ENCODE measurements at regions of chr7 and their contacts with region 1.

Region 1: DNA sequence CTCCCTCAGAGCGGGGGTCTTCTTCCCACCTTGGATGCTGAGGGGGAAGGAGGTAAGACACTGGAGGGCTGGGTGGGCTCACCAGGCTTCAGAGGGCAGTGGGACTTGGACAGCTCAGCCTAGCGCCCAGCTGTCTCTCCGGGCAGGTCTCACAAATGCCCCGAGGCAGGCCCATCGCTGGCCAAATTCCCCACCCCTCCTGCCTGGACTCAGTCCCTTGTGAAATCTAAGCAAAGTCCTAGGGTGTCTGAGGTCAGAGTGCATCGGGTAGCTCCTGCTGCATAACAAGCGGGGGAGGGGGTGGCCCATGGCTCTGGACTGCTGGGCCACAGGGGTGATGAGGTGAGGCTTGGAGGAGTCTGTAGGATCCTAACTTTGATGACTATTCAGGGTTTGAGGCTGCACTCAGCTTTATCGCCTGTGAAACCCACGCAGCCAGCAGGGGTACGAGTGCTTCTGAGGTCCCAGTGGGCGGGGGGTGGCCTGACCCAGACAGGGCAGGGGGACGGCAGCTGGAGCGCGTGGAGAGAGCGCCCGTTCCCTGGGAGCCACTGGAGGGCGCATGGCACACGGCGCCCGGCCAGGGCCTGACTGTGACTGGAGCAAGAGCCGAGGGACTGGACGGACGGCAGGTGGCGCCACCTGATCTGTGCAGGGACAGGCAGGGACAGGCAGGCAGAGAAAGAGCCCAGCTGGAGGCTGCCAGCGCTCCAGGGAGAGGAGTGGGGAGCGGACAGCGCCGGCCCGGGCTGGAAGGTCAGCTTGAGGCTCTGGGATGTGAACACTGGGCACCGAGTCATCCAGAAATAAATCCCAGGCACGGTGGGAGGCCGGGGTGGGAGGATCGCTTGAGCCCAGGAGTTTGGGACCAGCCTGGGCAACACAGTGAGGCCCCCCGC is 10.0 kb downstream of the CYP2W1 start:
- DNase-seq: peak; percentile 94 to 96
- H3K4me3 ChIP-seq: no peak overlapping the region
- H3K27ac ChIP-seq: no peak overlapping the region
- H3K4me1 ChIP-seq: peaks cover 0 to 8% (median 5%) of the 10 kb centered on the region in 4 experiments; a peak in 5 of 7 replicates
- H3K27me3 ChIP-seq: no peaks in the 10 kb centered on the region
- CTCF ChIP-seq: peak in 2 of 3 experiments; percentile 100; a peak in 3 of 4 replicates
- EP300 ChIP-seq: 0 out of 3 replicates have a peak, but pooled peaks of 1 of the 2 experiments have one; percentile 42
- POLR2A ChIP-seq: no peak
- RAD21 ChIP-seq: peak; percentile 96 to 98

Region 2: GRCh38 chr7:909358-910329 is 83.3 kb before region 1 on chr7:
- CTCF ChIA-PET with region 1: interaction called, 12 read pairs
- POLR2A ChIA-PET with region 1: no interaction called
- DNase-seq: no peak
- H3K4me3 ChIP-seq: peak overlapping the region in 1 of 4 experiments; percentile 49; a peak in 3 of 8 replicates
- H3K27ac ChIP-seq: no peak overlapping the region
- H3K4me1 ChIP-seq: peaks cover 0 to 12% (median 2%) of the 10 kb centered on the region in 4 experiments; a peak in 3 of 7 replicates
- H3K27me3 ChIP-seq: peaks cover 0 to 11% (median 9%) of the 10 kb centered on the region in 4 experiments; a peak in 4 of 7 replicates
- CTCF ChIP-seq: no peak
- EP300 ChIP-seq: no peak
- POLR2A ChIP-seq: no peak
- RAD21 ChIP-seq: no peak

Region 3: GRCh38 chr7:920351-921070 is 72.4 kb before region 1 on chr7:
- CTCF ChIA-PET with region 1: no interaction called
- POLR2A ChIA-PET with region 1: no interaction called
- DNase-seq: peak in 1 of 2 experiments; percentile 44
- H3K4me3 ChIP-seq: no peak overlapping the region
- H3K27ac ChIP-seq: no peak overlapping the region
- H3K4me1 ChIP-seq: peaks cover 0 to 8% (median 0%) of the 10 kb centered on the region in 4 experiments; a peak in 2 of 7 replicates
- H3K27me3 ChIP-seq: no peaks in the 10 kb centered on the region
- CTCF ChIP-seq: no peak
- EP300 ChIP-seq: no peak
- POLR2A ChIP-seq: no peak
- RAD21 ChIP-seq: no peak

Region 4: GRCh38 chr7:1004018-1004852 is 11.3 kb after region 1 on chr7:
- CTCF ChIA-PET with region 1: interaction called, 36 read pairs
- POLR2A ChIA-PET with region 1: no interaction called
- DNase-seq: no peak
- H3K4me3 ChIP-seq: no peak overlapping the region
- H3K27ac ChIP-seq: no peak overlapping the region
- H3K4me1 ChIP-seq: peaks cover 0 to 3% (median 2%) of the 10 kb centered on the region in 4 experiments; a peak in 2 of 7 replicates
- H3K27me3 ChIP-seq: no peaks in the 10 kb centered on the region
- CTCF ChIP-seq: no peak
- EP300 ChIP-seq: no peak
- POLR2A ChIP-seq: no peak
- RAD21 ChIP-seq: no peak

Region 5: DNA sequence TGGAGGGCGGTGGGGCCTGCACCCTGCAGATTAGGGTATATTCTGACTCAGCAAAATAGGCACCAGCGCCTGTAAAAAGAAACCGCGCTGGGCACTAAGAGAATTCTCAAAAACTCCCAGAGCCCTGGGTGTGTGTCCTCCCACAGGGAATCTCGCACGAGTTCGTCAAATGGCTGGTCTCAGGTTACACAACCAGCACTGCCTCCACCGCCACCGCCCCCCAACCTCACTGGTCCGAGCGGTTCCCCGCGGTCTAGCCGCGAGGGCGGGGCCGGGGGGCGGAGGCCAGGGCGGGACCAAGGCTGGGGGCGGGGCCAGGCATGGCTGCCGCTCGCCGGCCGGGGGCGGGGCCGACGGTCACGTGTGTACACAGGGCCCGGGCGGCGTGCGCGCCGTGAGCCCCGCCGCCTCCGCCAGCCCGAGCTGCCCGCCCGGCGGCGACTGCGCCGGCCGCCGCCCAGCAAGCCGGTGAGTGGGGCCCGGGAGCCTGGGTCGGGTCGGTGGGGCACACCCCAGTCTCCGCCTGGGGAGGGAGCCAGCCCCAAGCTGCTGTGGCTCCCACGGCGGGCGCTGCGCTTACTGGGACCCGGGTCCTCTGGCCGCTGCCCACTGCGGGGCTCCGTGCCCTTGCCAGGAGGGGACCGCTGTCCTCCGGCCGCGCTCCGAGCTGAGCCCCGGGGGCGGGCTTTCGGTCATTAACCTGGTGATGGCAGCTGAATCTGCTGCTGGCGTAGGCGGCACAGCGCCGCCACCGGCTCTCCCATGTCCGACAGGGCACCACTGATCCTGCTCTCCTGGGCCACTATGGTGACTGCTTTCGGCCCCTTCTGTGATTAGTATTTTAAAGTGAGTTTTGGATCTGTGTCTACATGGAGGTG is 51.5 kb after region 1 on chr7 and contains the start of gene GPR146:
- CTCF ChIA-PET with region 1: interaction called, 46 read pairs
- POLR2A ChIA-PET with region 1: interaction called, 4 read pairs
- DNase-seq: peak; percentile 74 to 98
- H3K4me3 ChIP-seq: peak within 1 kb of the TSS; percentile 64 to 77 (median 70)
- H3K27ac ChIP-seq: peak within 1 kb of the TSS; percentile 81
- H3K4me1 ChIP-seq: peaks cover 6 to 17% (median 11%) of the 10 kb centered on the region in 4 experiments
- H3K27me3 ChIP-seq: no peaks in the 10 kb centered on the region
- CTCF ChIP-seq: peak; percentile 64 to 76 (median 74)
- EP300 ChIP-seq: 0 out of 3 replicates have a peak, but pooled peaks of 1 of the 2 experiments have one; percentile 11
- POLR2A ChIP-seq: peak in 1 of 2 experiments; percentile 59; a peak in 2 of 3 replicates
- RAD21 ChIP-seq: peak; percentile 26 to 53; a peak in 3 of 4 replicates
- total RNA-seq, gene GPR146: 0.54 and 1.8 TPM in 2 replicates

Region 6: GRCh38 chr7:1086588-1087464 is 93.9 kb after region 1 on chr7:
- CTCF ChIA-PET with region 1: interaction called, 83 read pairs
- POLR2A ChIA-PET with region 1: no interaction called
- DNase-seq: peak; percentile 57 to 93
- H3K4me3 ChIP-seq: peak overlapping the region in 3 of 4 experiments; percentile 18 to 51 (median 43); a peak in 5 of 8 replicates
- H3K27ac ChIP-seq: no peak overlapping the region
- H3K4me1 ChIP-seq: peaks cover 2 to 19% (median 4%) of the 10 kb centered on the region in 4 experiments
- H3K27me3 ChIP-seq: no peaks in the 10 kb centered on the region
- CTCF ChIP-seq: peak in 2 of 3 experiments; percentile 71 to 88; a peak in 3 of 4 replicates
- EP300 ChIP-seq: no peak
- POLR2A ChIP-seq: no peak
- RAD21 ChIP-seq: peak; percentile 40 to 55

Region 7: GRCh38 chr7:1137510-1138167 is 144.7 kb after region 1 on chr7:
- CTCF ChIA-PET with region 1: interaction called, 24 read pairs
- POLR2A ChIA-PET with region 1: interaction called, 3 read pairs
- DNase-seq: no peak
- H3K4me3 ChIP-seq: peak overlapping the region; percentile 50 to 76 (median 67)
- H3K27ac ChIP-seq: no peak overlapping the region
- H3K4me1 ChIP-seq: peaks cover 0 to 6% (median 2%) of the 10 kb centered on the region in 4 experiments; a peak in 4 of 7 replicates
- H3K27me3 ChIP-seq: no peaks in the 10 kb centered on the region
- CTCF ChIP-seq: no peak
- EP300 ChIP-seq: no peak
- POLR2A ChIP-seq: no peak
- RAD21 ChIP-seq: no peak

Region 8: GRCh38 chr7:1169409-1170368 is 176.7 kb after region 1 on chr7:
- CTCF ChIA-PET with region 1: interaction called, 14 read pairs
- POLR2A ChIA-PET with region 1: interaction called, 3 read pairs
- DNase-seq: peak in 1 of 2 experiments; percentile 98
- H3K4me3 ChIP-seq: peak overlapping the region in 3 of 4 experiments; percentile 8 to 45 (median 14); a peak in 4 of 8 replicates
- H3K27ac ChIP-seq: no peak overlapping the region
- H3K4me1 ChIP-seq: no peaks in the 10 kb centered on the region; a peak in 2 of 7 replicates
- H3K27me3 ChIP-seq: no peaks in the 10 kb centered on the region
- CTCF ChIP-seq: peak in 2 of 3 experiments; percentile 88 to 94; a peak in 3 of 4 replicates
- EP300 ChIP-seq: no peak
- POLR2A ChIP-seq: peak in 1 of 2 experiments; percentile 41; a peak in 1 of 3 replicates
- RAD21 ChIP-seq: peak in 1 of 2 experiments; percentile 51; a peak in 3 of 4 replicates

Region 9: DNA sequence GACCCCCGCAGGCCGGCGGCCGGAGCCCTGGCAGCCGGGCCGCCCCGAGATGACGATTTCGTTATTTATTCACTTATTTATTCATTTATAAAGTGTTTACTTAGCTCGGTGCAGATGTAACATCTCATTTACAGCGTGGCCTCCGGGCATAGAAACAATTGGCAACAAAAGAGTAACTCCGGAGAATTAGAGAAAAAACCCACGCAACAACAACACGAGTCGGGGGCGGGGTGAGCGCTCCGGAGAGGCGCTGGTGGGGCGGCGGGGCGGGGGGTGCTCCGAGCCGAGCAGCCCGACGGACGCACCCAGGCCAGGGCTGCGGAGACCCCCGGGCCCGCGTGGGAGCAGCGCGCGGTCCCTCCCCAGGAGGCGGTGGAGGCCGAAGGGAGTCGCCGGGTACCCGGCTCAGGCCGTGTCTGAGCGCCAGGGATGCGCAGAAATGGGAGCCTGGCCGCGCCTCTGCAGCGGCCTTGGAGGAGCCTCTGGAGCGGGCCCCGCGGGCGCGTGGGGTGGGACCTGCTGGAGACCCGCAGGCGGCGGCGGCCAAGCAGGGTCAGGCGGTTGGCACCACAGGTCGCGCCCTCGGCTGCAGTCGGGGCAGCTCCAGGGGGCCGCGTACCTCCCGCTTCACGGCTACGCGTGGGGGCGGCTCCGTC is 254.0 kb after region 1 on chr7:
- CTCF ChIA-PET with region 1: no interaction called
- POLR2A ChIA-PET with region 1: no interaction called
- DNase-seq: no peak
- H3K4me3 ChIP-seq: peak overlapping the region in 1 of 4 experiments; percentile 35; a peak in 2 of 8 replicates
- H3K27ac ChIP-seq: no peak overlapping the region
- H3K4me1 ChIP-seq: peaks cover 4 to 29% (median 22%) of the 10 kb centered on the region in 4 experiments
- H3K27me3 ChIP-seq: peaks cover 78 to 91% (median 90%) of the 10 kb centered on the region in 4 experiments
- CTCF ChIP-seq: no peak
- EP300 ChIP-seq: no peak
- POLR2A ChIP-seq: no peak
- RAD21 ChIP-seq: no peak

Region 10: GRCh38 chr7:1275451-1276381 is 282.8 kb after region 1 on chr7:
- CTCF ChIA-PET with region 1: no interaction called
- POLR2A ChIA-PET with region 1: no interaction called
- DNase-seq: no peak
- H3K4me3 ChIP-seq: no peak overlapping the region
- H3K27ac ChIP-seq: no peak overlapping the region
- H3K4me1 ChIP-seq: no peaks in the 10 kb centered on the region
- H3K27me3 ChIP-seq: no peaks in the 10 kb centered on the region
- CTCF ChIP-seq: no peak
- EP300 ChIP-seq: no peak
- POLR2A ChIP-seq: no peak
- RAD21 ChIP-seq: no peak